ENCODE measurements at regions of chr15 and their contacts with region 1.

Region 1: DNA sequence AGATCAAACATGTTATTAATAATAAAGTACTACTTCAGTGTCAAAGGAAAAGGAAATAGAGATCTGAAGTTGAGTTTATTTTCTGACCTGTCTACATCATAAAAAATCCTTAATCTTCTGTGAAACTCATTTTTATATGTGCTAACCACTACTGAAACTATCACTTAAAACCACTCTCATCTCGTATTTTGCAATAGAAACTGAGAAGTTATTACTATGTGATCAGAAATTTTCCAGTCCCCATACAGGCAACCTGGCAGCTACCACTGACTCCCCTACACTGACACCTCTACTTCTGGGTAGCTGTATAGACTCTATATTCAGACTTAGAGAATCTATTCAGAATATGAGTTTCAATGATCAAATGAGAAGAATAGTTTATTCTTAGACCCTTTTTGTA is 8.3 kb downstream of the HDGFL3 start:
- DNase-seq: no peak
- H3K4me3 Mint-ChIP-seq: no peak overlapping the region
- H3K27ac Mint-ChIP-seq: peak overlapping the region; percentile 57
- H3K4me1 Mint-ChIP-seq: peaks cover 22% of the 10 kb centered on the region
- H3K27me3 Mint-ChIP-seq: peaks cover 34% of the 10 kb centered on the region

Region 2: DNA sequence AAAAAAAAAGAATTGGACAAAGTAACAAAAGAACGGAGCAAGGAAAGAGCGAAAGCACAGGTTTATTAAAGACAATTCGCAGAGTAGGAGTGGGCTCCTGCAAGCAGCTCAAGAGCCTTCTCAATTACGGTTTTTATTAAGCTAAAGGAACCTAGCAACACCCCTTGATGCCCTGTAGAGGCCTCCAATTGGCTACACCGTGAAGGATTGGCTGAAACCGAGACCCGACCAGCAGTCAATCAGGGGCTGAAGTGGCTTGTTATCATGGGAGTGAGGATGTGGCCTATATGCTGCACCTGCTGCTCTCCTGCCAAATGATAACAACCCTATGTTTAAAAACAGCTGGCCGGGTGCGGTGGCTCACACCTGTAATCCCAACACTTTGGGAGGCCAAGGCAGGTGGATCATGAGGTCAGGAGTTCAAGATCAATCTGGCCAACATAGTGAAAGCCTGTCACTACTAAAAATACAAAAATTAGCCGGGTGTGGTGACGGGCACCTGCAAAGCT is 469.2 kb before region 1 on chr15:
- intact Hi-C with region 1: no loop called
- DNase-seq: no peak
- H3K4me3 Mint-ChIP-seq: no peak overlapping the region
- H3K27ac Mint-ChIP-seq: no peak overlapping the region
- H3K4me1 Mint-ChIP-seq: no peaks in the 10 kb centered on the region
- H3K27me3 Mint-ChIP-seq: no peaks in the 10 kb centered on the region

Region 3: GRCh38 chr15:82966671-82967071 is 232.6 kb before region 1 on chr15:
- intact Hi-C with region 1: loop called (anchors 1 kb)
- DNase-seq: peak; percentile 20
- H3K4me3 Mint-ChIP-seq: no peak overlapping the region
- H3K27ac Mint-ChIP-seq: no peak overlapping the region
- H3K4me1 Mint-ChIP-seq: peaks cover 30% of the 10 kb centered on the region
- H3K27me3 Mint-ChIP-seq: peaks cover 10% of the 10 kb centered on the region

Region 4: DNA sequence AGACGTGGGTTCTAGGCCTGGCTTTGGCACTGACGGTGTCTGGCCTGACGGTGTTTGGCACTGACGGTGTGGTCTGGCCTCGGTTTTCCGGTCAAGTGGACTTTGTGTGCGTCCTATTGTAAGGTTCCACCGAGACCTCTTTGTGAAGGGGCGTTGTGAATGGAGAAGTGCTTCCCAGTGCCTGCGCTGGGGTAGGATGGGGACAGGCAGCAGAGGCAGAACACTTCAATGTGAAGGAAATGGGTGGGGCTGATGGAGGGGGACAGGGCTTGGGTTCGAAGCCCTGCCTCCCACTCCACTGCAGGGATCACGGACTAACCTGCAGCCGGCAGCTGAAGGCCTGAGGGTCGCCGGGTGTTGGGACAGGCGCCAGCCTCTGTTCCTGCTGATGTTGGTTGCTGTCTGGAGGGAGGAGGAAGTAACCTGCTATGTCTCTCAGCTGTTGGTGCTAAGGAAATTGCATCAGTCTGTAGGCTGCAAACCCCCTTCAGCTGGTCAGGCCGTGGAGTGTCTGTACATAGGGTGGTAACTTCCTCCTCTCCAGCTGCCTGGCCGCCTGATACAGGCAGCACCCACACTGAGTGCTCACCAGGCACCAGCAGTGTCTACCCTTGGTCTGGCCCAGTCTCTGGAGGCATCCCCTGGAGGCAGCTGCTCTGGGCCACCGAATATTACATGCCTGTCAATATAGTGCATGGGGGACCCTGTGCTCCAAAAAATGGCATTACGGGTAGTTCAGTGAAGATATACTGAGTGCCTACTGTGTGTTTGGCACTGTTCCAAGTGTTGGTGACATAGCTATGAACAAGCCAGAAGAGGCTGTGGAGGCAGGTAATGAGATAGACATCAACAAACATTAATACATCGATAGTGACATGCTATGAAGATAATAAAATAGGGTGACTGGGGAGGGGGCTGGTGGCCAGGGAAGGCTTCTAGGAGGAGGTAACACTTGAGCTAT is 90.7 kb before region 1 on chr15:
- intact Hi-C with region 1: loop called (anchors 5 kb)
- DNase-seq: peak; percentile 27
- H3K4me3 Mint-ChIP-seq: peak overlapping the region; percentile 82
- H3K27ac Mint-ChIP-seq: peak overlapping the region; percentile 25
- H3K4me1 Mint-ChIP-seq: peaks cover 24% of the 10 kb centered on the region
- H3K27me3 Mint-ChIP-seq: peaks cover 15% of the 10 kb centered on the region

Region 5: GRCh38 chr15:83144189-83144588 is 55.1 kb before region 1 on chr15:
- intact Hi-C with region 1: no loop called
- DNase-seq: no peak
- H3K4me3 Mint-ChIP-seq: no peak overlapping the region
- H3K27ac Mint-ChIP-seq: no peak overlapping the region
- H3K4me1 Mint-ChIP-seq: no peaks in the 10 kb centered on the region
- H3K27me3 Mint-ChIP-seq: peaks cover 7% of the 10 kb centered on the region

Region 6: GRCh38 chr15:83164111-83164770 is 35.0 kb before region 1 on chr15:
- intact Hi-C with region 1: loop called (anchors 5 kb)
- DNase-seq: no peak
- H3K4me3 Mint-ChIP-seq: peak overlapping the region; percentile 28
- H3K27ac Mint-ChIP-seq: peak overlapping the region; percentile 63
- H3K4me1 Mint-ChIP-seq: peaks cover 20% of the 10 kb centered on the region
- H3K27me3 Mint-ChIP-seq: peaks cover 19% of the 10 kb centered on the region

Region 7: DNA sequence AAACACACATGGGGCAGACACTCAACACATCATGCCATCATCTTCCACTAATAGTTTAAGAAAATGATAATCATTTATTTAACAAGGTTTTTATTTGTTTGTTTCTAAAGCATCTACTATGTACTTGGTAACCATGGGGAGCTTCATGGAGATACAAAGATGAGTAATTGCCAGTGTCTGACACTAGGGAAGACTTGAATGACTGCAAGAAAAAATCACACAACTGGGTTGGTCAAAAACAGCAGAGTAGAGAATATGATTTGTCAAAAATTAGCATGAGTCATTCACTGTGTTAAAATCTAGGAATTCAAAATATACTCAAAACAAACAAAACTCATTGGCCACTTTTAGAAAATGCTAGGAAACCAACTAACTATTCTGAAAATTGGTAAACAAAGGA is 78.9 kb after region 1 on chr15:
- intact Hi-C with region 1: loop called (anchors 5 kb)
- DNase-seq: no peak
- H3K4me3 Mint-ChIP-seq: no peak overlapping the region
- H3K27ac Mint-ChIP-seq: no peak overlapping the region
- H3K4me1 Mint-ChIP-seq: peaks cover 4% of the 10 kb centered on the region
- H3K27me3 Mint-ChIP-seq: peaks cover 63% of the 10 kb centered on the region

Measured in activated T-helper 2 cell treated with anti-CD3 and anti-CD28 coated beads, Interferon-gamma antibody, Interleukin-2, Interleukin-4, amounts not matched to agents 10 μg/mL and 5 μg/mL and 100 μg/mL, durations not matched to agents 14 hours and 24 hours and 36 hours (primary cell).